SK-N-SH (cell line): ENCODE measurements at regions of chr16 and their contacts with region 1.

Region 1: DNA sequence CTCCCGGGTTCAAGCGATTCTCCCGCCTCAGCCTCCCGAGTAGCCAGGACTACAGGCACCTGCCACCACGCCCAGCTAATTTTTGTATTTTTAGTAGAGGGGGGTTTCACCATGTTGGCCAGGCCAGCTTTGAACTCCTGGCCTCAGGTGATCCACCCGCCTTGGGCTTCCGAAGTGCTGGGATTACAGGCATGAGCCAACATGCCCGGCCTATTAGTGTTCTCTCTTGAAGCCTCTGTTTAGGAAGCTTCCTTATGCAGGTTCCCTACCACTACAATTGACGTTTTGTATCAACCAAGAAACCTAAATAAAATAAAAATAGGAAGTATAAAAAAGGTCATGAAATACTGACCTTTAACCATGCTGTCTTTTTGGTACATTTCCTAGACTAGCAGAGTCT is 16.0 kb downstream of the CHST5 start:
- DNase-seq: no peak
- H3K4me3 ChIP-seq: no peak overlapping the region
- H3K27ac ChIP-seq: no peak overlapping the region
- H3K4me1 ChIP-seq: no peaks in the 10 kb centered on the region; a peak in 1 of 4 replicates
- H3K27me3 ChIP-seq: no peaks in the 10 kb centered on the region
- CTCF ChIP-seq: no peak
- EP300 ChIP-seq: no peak
- RAD21 ChIP-seq: no peak

Region 2: DNA sequence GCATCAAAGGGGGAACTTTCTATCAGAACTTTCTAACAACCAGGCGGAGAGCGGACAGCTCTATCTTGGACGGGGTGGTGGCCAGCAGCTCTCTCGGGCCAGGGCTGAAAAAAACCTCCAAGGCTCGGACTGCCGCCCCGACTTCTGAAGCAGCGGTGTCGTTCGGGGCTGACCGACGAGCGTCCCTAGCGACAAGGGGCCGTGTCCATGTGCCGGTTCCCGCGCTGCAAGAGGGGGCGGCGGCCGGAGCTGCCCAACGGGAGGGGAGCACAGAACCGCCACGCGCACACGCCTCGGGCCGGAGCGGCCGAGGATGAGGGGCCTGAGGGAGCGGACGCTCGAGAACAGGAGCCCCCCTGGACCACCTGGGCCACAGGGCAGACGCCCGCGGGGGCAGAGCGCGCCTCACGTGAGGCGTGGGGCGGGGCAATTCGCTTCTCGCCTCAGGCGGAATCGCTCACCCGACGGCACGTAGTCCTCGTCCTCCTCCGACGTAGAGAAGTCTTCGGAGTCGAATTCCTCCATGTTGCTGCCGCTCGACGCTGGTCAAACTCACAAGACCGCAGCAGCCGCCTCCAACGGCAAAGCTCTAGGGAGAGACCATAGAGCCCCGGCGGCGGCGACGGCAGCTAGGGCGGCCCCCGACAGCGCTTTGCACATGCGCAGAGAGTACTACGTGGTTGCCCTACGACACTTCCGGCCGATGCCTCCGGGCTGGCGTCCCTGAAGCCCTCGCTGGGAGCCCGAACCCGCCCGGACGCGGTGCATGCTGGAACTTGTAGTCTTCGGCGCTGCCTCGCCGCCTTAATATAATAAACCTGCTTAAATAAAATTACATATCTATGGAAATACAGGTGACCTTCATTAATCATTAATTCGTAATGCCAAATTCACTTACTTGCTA is 86.8 kb before region 1 on chr16 and contains the start of gene CFDP1:
- CTCF ChIA-PET with region 1: no interaction called
- POLR2A ChIA-PET with region 1: no interaction called
- DNase-seq: peak; percentile 98
- H3K4me3 ChIP-seq: peak within 1 kb of the TSS; percentile 74 to 92
- H3K27ac ChIP-seq: peak within 1 kb of the TSS; percentile 69 to 85
- H3K4me1 ChIP-seq: peaks cover 0 to 10% of the 10 kb centered on the region in 2 experiments; a peak in 1 of 4 replicates
- H3K27me3 ChIP-seq: no peaks in the 10 kb centered on the region
- CTCF ChIP-seq: no peak
- EP300 ChIP-seq: 0 out of 4 replicates have a peak, but pooled peaks of 1 of the 2 experiments have one; percentile 9
- RAD21 ChIP-seq: no peak; the same call in 1 of the 2 replicates
- polyA plus RNA-seq, gene CFDP1: 37.9 and 46.0 TPM in 2 replicates

Region 3: GRCh38 chr16:75464130-75464918 is 55.6 kb before region 1 on chr16 and contains the start of gene TMEM170A:
- CTCF ChIA-PET with region 1: interaction called, 40 read pairs
- POLR2A ChIA-PET with region 1: no interaction called
- DNase-seq: peak; percentile 98
- H3K4me3 ChIP-seq: peak within 1 kb of the TSS; percentile 69 to 85
- H3K27ac ChIP-seq: peak within 1 kb of the TSS; percentile 80 to 95
- H3K4me1 ChIP-seq: peaks cover 0 to 3% of the 10 kb centered on the region in 2 experiments; a peak in 2 of 4 replicates
- H3K27me3 ChIP-seq: no peaks in the 10 kb centered on the region
- CTCF ChIP-seq: peak; percentile 100
- EP300 ChIP-seq: no peak
- RAD21 ChIP-seq: peak; percentile 77; the same call in 1 of the 2 replicates
- polyA plus RNA-seq, gene TMEM170A: 9.2 and 11.0 TPM in 2 replicates

Region 4: GRCh38 chr16:75486676-75487313 is 33.1 kb before region 1 on chr16:
- CTCF ChIA-PET with region 1: interaction called, 14 read pairs
- POLR2A ChIA-PET with region 1: interaction called, 3 read pairs
- DNase-seq: no peak
- H3K4me3 ChIP-seq: no peak overlapping the region
- H3K27ac ChIP-seq: no peak overlapping the region
- H3K4me1 ChIP-seq: peaks cover 0 to 2% of the 10 kb centered on the region in 2 experiments; a peak in 1 of 4 replicates
- H3K27me3 ChIP-seq: no peaks in the 10 kb centered on the region
- CTCF ChIP-seq: no peak
- EP300 ChIP-seq: no peak
- RAD21 ChIP-seq: no peak

Region 5: DNA sequence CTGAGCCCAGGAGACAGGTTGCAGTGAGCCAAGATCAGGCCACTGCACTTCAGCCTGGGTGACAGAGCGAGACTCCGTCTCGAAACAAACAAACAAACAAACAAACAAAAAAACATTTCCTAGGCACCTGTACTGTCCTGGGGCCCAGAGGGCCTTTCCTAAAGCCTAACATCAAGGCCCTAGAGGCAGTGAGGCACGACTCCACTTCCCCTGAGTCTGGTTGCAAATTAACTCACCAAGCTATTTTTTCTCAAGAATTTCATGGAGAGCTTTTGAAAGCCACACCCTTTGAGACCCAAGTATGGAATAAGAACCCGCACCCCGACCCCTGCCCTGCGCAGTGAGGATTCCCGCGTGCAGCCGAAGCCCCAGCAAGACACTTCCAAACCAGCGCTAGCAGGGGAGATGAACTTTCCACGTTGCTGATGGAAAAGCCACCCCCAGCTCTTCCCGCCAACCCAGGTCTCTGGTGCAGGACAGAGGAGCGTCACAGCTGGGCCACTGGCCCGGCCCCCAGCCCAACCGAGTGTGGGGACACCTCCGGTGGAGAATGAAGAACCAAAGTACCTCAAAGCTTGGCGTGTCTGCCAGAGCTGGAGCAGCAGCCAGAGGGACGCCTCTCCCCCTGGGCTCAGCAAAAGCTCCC is 14.8 kb after region 1 on chr16:
- CTCF ChIA-PET with region 1: interaction called, 11 read pairs
- POLR2A ChIA-PET with region 1: interaction called, 3 read pairs
- DNase-seq: no peak
- H3K4me3 ChIP-seq: no peak overlapping the region
- H3K27ac ChIP-seq: no peak overlapping the region
- H3K4me1 ChIP-seq: no peaks in the 10 kb centered on the region
- H3K27me3 ChIP-seq: no peaks in the 10 kb centered on the region
- CTCF ChIP-seq: no peak
- EP300 ChIP-seq: no peak
- RAD21 ChIP-seq: no peak

Region 6: DNA sequence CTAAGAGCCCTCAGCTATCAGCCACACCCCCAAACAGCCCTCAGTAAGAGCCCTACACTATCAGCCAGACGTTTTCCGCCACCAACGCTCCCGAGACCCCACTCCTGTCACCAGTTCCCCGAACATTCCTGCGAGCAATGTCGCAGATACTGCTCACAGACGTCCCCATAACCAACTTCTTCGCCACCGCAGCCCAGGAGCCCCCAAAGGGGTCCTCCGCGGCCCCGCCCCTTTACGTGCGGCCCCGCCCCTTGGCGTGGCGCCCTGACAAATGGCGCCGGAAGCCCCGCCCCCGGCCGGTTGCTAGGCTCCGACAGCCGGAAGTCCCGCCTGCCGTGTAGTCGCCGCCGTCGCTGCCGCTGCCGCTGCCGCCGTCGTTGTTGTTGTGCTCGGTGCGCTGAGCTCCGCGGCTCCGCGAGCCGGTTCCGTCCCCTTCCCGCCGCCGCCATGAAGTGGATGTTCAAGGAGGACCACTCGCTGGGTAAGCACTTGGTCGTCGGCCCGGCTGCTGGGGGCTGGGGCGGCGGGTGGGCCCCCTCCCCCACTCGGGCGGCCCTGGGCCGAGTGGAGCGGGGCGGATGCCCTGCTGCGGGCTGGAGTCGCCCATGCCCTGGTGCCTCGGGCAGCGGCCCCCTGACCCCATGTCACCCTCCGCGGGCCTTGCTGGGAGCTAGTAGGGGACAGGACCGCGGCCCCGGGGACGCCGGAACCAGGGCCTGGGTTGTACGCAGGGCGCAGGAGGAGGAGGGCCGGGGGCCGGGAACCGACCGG is 46.3 kb after region 1 on chr16 and contains the start of gene GABARAPL2:
- CTCF ChIA-PET with region 1: interaction called, 7 read pairs
- POLR2A ChIA-PET with region 1: interaction called, 10 read pairs
- DNase-seq: peak; percentile 95
- H3K4me3 ChIP-seq: peak within 1 kb of the TSS; percentile 80 to 88
- H3K27ac ChIP-seq: peak within 1 kb of the TSS; percentile 37 to 64; a peak in 2 of 4 replicates
- H3K4me1 ChIP-seq: peaks cover 14 to 16% of the 10 kb centered on the region in 2 experiments; a peak in 3 of 4 replicates
- H3K27me3 ChIP-seq: no peaks in the 10 kb centered on the region; the same call in 1 of the 2 replicates
- CTCF ChIP-seq: no peak
- EP300 ChIP-seq: no peak; a peak in 1 of 4 replicates
- RAD21 ChIP-seq: no peak
- polyA plus RNA-seq, gene GABARAPL2: 135 and 143 TPM in 2 replicates